OCI-LY7 (cell line): ENCODE measurements at regions of chr6 and their contacts with region 1.

Region 1: GRCh38 chr6:121055572-121056163 is 278.6 kb downstream of the TBC1D32 start:
- DNase-seq: peak; percentile 35
- H3K4me3 ChIP-seq: no peak overlapping the region
- H3K27ac ChIP-seq: no peak overlapping the region
- H3K4me1 ChIP-seq: no peaks in the 10 kb centered on the region
- CTCF ChIP-seq: peak; percentile 86

Region 2: GRCh38 chr6:120894077-120894476 is 161.6 kb before region 1 on chr6:
- CTCF ChIA-PET with region 1: no interaction called
- POLR2A ChIA-PET with region 1: no interaction called
- intact Hi-C with region 1: no loop called
- DNase-seq: no peak
- H3K4me3 ChIP-seq: no peak overlapping the region
- H3K27ac ChIP-seq: no peak overlapping the region
- H3K4me1 ChIP-seq: no peaks in the 10 kb centered on the region
- CTCF ChIP-seq: no peak

Region 3: GRCh38 chr6:121305957-121306607 is 250.4 kb after region 1 on chr6:
- CTCF ChIA-PET with region 1: no interaction called
- POLR2A ChIA-PET with region 1: no interaction called
- intact Hi-C with region 1: loop called (anchors 5 kb)
- DNase-seq: peak; percentile 30
- H3K4me3 ChIP-seq: no peak overlapping the region
- H3K27ac ChIP-seq: no peak overlapping the region
- H3K4me1 ChIP-seq: no peaks in the 10 kb centered on the region
- CTCF ChIP-seq: peak; percentile 73

Region 4: GRCh38 chr6:121849477-121849876 is 793.8 kb after region 1 on chr6:
- CTCF ChIA-PET with region 1: no interaction called
- POLR2A ChIA-PET with region 1: no interaction called
- intact Hi-C with region 1: loop called (anchors 2 kb)
- DNase-seq: peak; percentile 57
- H3K4me3 ChIP-seq: no peak overlapping the region
- H3K27ac ChIP-seq: no peak overlapping the region
- H3K4me1 ChIP-seq: no peaks in the 10 kb centered on the region
- CTCF ChIP-seq: peak; percentile 87

Region 5: GRCh38 chr6:122033539-122034181 is 978.0 kb after region 1 on chr6:
- CTCF ChIA-PET with region 1: no interaction called
- POLR2A ChIA-PET with region 1: no interaction called
- intact Hi-C with region 1: loop called (anchors 10 kb)
- DNase-seq: peak; percentile 43
- H3K4me3 ChIP-seq: no peak overlapping the region
- H3K27ac ChIP-seq: no peak overlapping the region
- H3K4me1 ChIP-seq: no peaks in the 10 kb centered on the region
- CTCF ChIP-seq: peak; percentile 83